Esophagus squamous epithelium (tissue), 5 donors: ENCODE measurements at regions of chr15 and their contacts with region 1.

Region 1: DNA sequence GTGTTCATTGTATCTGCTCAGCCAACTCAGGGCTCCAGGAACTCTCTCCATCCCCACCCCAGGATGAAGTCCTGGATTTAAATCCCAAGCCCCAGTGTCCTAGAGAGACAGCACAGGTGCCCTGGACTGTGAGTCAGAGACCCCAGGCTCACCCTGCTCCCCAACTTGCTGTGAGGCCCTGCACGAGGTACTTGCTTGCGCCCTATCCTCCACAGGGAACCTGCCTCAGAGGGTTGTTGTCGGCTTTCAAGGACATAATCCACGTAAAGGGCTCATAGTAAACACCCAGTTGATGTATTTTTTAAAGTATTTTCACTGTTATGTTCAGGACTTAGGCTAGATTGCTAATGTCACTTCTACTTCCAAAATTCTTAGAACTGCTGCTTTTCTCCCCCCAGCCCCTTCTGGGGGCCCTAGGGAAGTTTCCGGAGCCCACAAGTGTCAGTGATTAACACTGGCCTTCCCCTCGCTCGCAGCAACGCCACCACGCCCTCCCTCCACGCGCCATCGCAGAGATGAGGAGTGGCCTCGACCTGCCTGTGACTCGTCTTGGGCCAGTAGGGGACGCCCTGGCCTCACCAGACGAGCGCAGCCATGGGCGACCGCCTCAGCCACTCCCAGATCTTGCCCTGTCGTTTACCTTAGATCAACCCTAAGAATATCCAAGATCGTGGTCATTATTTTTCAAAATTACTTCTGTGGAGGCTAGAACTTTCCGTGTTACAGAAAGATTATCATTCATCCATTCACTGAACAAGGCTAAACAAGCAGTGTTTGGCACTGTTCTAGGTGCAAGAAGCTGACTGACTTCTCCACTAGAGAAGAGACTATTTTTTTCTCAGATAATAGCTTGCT is 6.0 kb upstream of the SRP14 start:
- DNase-seq: peak; percentile 51
- H3K4me3 ChIP-seq: peak overlapping the region in 2 of 4 donors; percentile 5 to 44
- H3K27ac ChIP-seq: peak overlapping the region; percentile 28 to 66 (median 62)
- H3K4me1 ChIP-seq: peaks cover 29 to 60% (median 43%) of the 10 kb centered on the region in 3 donors
- H3K27me3 ChIP-seq: no peaks in the 10 kb centered on the region
- CTCF ChIP-seq: peak; percentile 79 to 95 (median 91)
- POLR2A ChIP-seq: no peak

Region 2: DNA sequence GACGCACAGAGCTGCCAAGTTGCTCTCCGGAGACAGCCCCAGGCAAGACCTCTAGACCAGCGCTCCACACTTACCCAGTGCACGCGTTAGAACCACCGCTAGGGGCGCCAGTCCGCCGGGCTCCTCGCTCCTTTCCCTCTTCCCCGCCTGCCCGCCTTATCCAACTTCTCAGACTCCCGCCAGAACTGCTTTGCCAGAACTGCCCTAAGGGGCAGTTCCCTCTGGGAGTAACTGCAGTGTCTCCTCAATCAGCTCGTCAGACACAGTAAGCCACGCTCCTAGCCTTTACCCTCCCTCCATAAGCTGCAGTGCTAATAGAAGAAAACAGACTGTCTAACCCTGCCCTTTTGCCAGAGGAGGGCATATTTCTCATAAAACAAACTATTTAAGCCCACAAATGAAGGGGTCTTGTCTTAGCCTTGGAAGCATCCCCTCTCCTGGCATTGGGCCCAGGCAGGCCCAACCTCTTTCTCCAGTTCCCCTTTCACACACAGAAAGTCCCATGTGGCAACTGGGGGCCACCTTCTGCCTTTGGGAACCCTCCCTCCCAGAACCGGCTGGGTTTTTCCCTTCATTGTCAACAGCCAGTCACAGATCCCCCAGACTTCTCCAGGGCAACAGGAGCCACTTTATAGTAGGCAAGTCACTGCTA is 60.0 kb after region 1 on chr15:
- intact Hi-C with region 1: loop called (anchors 5 kb)
- DNase-seq: no peak
- H3K4me3 ChIP-seq: peak overlapping the region in 2 of 4 donors; percentile 1 to 17
- H3K27ac ChIP-seq: peak overlapping the region; percentile 72 to 93 (median 88)
- H3K4me1 ChIP-seq: peaks cover 73 to 96% (median 80%) of the 10 kb centered on the region in 3 donors
- H3K27me3 ChIP-seq: peaks cover 0 to 13% (median 0%) of the 10 kb centered on the region in 4 donors
- CTCF ChIP-seq: peak; percentile 84 to 98 (median 93)
- POLR2A ChIP-seq: no peak

Region 3: DNA sequence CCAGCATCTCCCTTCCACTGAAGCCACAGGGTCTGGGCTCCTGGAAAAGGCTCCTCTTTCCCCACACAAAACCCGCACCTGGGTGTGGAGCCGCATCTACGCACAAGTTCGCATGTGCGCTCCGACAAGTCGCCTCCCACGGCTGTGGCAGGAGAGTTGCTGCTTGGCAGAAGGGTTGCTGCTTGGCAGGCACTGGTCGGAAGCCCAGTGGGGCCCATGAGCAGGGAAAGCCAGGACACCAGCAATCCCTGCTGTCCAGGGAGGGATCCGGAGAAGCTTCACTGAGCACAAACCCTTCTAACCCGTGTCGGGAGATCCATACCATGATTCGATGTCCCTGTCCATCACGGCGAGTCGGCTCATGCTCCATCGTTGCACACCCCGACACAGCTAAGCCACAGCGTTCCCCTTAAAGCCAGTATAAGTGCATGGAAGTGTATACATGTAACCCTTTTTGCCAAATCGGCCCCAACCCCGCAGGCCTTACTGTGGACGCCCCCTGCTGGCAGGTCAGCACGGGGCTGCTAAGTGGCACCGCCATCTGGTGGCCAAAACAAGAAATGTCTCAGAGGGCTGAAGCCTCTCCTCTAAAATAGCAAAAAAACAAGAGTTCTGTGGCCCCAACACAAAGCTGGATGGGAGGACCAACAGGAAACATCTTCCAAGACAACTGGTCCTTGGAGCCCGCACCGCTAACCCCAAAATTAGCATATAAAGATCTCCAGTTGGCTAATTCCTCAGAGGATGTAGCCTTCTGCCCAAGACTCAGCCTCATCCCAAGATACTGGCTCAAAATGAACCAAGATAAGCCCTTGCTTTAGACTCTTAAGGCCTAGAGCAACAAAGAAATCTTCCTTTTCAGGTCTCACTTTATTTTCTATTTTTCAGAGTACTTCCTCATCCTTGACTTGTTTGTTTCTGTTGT is 229.7 kb after region 1 on chr15:
- intact Hi-C with region 1: loop called (anchors 10 kb)
- DNase-seq: peak; percentile 42
- H3K4me3 ChIP-seq: no peak overlapping the region
- H3K27ac ChIP-seq: no peak overlapping the region
- H3K4me1 ChIP-seq: peaks cover 2 to 19% (median 3%) of the 10 kb centered on the region in 3 donors
- H3K27me3 ChIP-seq: peaks cover 0 to 22% (median 2%) of the 10 kb centered on the region in 4 donors
- CTCF ChIP-seq: peak; percentile 99 to 100 (median 100)
- POLR2A ChIP-seq: no peak